Activated CD4-positive, alpha-beta T cell treated with anti-CD3 and anti-CD28 coated beads for 36 hours (primary cell): ENCODE measurements at regions of chr1 and their contacts with region 1.

Region 1: DNA sequence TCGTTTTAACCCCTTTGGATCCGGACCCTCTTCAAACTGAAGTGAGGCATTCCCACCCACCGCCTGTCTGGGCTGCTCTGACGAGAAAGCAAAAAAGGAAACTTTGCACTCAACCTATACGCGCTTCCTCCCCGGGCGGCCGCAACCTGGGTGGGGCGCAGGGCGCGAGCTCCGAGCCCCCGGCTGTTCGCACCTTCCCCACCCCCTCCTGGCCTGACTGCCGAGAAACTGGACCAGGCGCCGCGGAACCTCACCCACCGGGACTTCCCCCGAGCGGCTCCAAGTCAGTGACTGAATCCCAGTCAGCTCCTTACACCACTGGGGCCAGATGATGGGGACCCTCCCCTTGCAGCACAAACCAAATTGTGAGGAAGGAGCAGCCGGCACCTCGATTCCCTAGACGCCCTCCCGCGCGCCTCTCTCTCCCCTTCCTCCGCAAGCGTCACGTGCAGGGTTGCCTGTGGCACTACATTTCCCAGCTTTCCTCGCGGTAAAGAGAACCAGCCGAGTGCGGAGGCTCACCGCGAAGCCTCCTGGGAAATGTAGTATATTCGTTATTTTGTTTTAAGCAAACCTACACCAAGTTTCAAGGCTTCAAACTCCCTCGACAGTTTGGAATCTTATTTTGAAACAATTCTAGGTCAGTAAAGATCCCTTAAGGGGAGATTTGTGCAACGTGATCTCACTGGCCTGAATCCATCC is at the start of gene RAB29:
- DNase-seq: peak; percentile 93
- ATAC-seq: peak; percentile 80
- H3K4me3 Mint-ChIP-seq: peak within 1 kb of the TSS; percentile 89
- H3K27ac Mint-ChIP-seq: peak within 1 kb of the TSS; percentile 90
- H3K4me1 Mint-ChIP-seq: peaks cover 55% of the 10 kb centered on the region
- H3K27me3 Mint-ChIP-seq: no peaks in the 10 kb centered on the region
- total RNA-seq, gene RAB29: 29.3 to 29.4 TPM

Region 2: GRCh38 chr1:205711104-205712020 is 63.8 kb before region 1 on chr1:
- CTCF ChIA-PET with region 1: interaction called, 11 read pairs
- POLR2A ChIA-PET with region 1: interaction called, 5 read pairs
- intact Hi-C with region 1: loop called (anchors 2 kb)
- DNase-seq: peak; percentile 78
- ATAC-seq: peak; percentile 90
- H3K4me3 Mint-ChIP-seq: no peak overlapping the region
- H3K27ac Mint-ChIP-seq: peak overlapping the region; percentile 43
- H3K4me1 Mint-ChIP-seq: peaks cover 13% of the 10 kb centered on the region
- H3K27me3 Mint-ChIP-seq: no peaks in the 10 kb centered on the region

Region 3: GRCh38 chr1:205719762-205720161 is 55.4 kb before region 1 on chr1:
- CTCF ChIA-PET with region 1: no interaction called
- POLR2A ChIA-PET with region 1: interaction called, 3 read pairs
- intact Hi-C with region 1: loop called in 1 of 2 experiments (anchors 2 kb)
- DNase-seq: no peak
- ATAC-seq: peak; percentile 83
- H3K4me3 Mint-ChIP-seq: no peak overlapping the region
- H3K27ac Mint-ChIP-seq: peak overlapping the region; percentile 83
- H3K4me1 Mint-ChIP-seq: peaks cover 32% of the 10 kb centered on the region
- H3K27me3 Mint-ChIP-seq: no peaks in the 10 kb centered on the region

Region 4: GRCh38 chr1:205763980-205764379 is 11.2 kb before region 1 on chr1:
- CTCF ChIA-PET with region 1: interaction called, 11 read pairs
- POLR2A ChIA-PET with region 1: interaction called, 4 read pairs
- intact Hi-C with region 1: no loop called
- DNase-seq: no peak
- ATAC-seq: peak; percentile 66
- H3K4me3 Mint-ChIP-seq: no peak overlapping the region
- H3K27ac Mint-ChIP-seq: peak overlapping the region; percentile 34
- H3K4me1 Mint-ChIP-seq: peaks cover 23% of the 10 kb centered on the region
- H3K27me3 Mint-ChIP-seq: no peaks in the 10 kb centered on the region

Region 5: DNA sequence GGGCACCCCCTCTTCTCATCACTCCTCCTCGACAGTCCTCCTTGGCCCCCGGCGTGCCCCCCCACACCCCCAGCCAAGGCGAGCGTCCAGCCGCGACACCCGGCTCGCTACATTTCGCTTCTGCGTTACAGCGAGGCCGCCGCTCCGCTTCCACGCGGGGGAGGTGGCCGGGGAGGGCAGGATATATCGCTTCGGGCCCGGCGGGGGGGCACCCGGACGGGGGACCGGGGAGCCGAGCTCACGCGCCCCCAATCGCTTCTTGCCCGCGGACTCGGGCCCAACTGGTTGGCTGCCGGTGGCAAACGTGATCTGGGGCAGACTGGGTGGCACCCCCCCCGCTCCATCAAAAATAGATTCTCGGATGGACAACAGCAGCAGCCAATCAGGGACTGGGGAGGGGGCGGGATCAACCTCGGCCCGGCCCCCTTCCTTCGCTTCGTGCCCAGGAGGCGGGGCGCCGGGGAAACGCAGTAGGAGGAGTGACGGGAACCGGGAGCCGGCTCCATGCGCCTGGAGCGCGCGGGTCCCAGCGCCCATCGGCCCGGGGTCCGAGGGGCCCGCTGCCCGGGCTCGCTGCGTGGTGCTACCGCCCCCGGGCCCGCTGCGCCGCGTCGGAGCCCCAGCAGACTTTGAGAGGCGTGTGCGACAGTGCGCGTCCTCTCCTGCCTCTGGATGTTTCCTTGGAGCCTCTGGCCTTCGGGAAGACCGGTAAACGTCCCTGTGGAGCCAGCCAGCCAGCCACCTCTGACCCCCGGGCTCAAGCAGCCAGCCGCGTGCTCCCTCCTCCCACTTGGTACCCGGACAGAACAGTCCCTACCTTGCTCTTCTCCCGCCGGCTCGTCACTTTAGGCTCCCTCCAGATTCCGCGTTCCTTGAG is 38.0 kb after region 1 on chr1 and contains the start of gene SLC41A1:
- CTCF ChIA-PET with region 1: interaction called, 7 read pairs
- POLR2A ChIA-PET with region 1: no interaction called
- intact Hi-C with region 1: loop called (anchors 1 to 2 kb)
- DNase-seq: peak; percentile 94
- ATAC-seq: peak; percentile 96
- H3K4me3 Mint-ChIP-seq: peak within 1 kb of the TSS; percentile 81
- H3K27ac Mint-ChIP-seq: peak within 1 kb of the TSS; percentile 84
- H3K4me1 Mint-ChIP-seq: peaks cover 47% of the 10 kb centered on the region
- H3K27me3 Mint-ChIP-seq: no peaks in the 10 kb centered on the region
- total RNA-seq, gene SLC41A1: 34.4 to 41.5 TPM

Region 6: GRCh38 chr1:205849619-205850355 is 74.6 kb after region 1 on chr1 and contains the start of gene PM20D1:
- CTCF ChIA-PET with region 1: interaction called, 3 read pairs
- POLR2A ChIA-PET with region 1: interaction called, 3 read pairs
- intact Hi-C with region 1: loop called in 1 of 2 experiments (anchors 1 kb)
- DNase-seq: peak; percentile 89
- ATAC-seq: peak; percentile 98
- H3K4me3 Mint-ChIP-seq: peak within 1 kb of the TSS; percentile 83
- H3K27ac Mint-ChIP-seq: peak within 1 kb of the TSS; percentile 86
- H3K4me1 Mint-ChIP-seq: peaks cover 28% of the 10 kb centered on the region
- H3K27me3 Mint-ChIP-seq: no peaks in the 10 kb centered on the region
- total RNA-seq, gene PM20D1: 0.34 to 0.58 TPM

Region 7: GRCh38 chr1:206050655-206051235 is 275.6 kb after region 1 on chr1:
- CTCF ChIA-PET with region 1: no interaction called
- POLR2A ChIA-PET with region 1: no interaction called
- intact Hi-C with region 1: loop called in 1 of 2 experiments (anchors 5 kb)
- DNase-seq: peak; percentile 82
- ATAC-seq: peak; percentile 91
- H3K4me3 Mint-ChIP-seq: peak overlapping the region; percentile 2
- H3K27ac Mint-ChIP-seq: peak overlapping the region; percentile 87
- H3K4me1 Mint-ChIP-seq: peaks cover 41% of the 10 kb centered on the region
- H3K27me3 Mint-ChIP-seq: peaks cover 5% of the 10 kb centered on the region